ENCODE measurements at regions of chr15 and their contacts with region 1.

Region 1: GRCh38 chr15:54540721-54541120 is 562.5 kb downstream of the UNC13C start:
- DNase-seq: no peak
- ATAC-seq: no peak
- H3K4me3 ChIP-seq: no peak overlapping the region
- H3K27ac ChIP-seq: no peak overlapping the region
- H3K4me1 ChIP-seq: no peaks in the 10 kb centered on the region
- H3K27me3 ChIP-seq: no peaks in the 10 kb centered on the region
- CTCF ChIP-seq: no peak
- EP300 ChIP-seq: no peak
- POLR2A ChIP-seq: no peak
- RAD21 ChIP-seq: no peak

Region 2: GRCh38 chr15:54559405-54560069 is 18.8 kb after region 1 on chr15:
- CTCF ChIA-PET with region 1: no interaction called
- POLR2A ChIA-PET with region 1: no interaction called
- in situ Hi-C with region 1: no loop called
- intact Hi-C with region 1: no loop called
- DNase-seq: no peak
- ATAC-seq: no peak
- H3K4me3 ChIP-seq: no peak overlapping the region
- H3K27ac ChIP-seq: no peak overlapping the region
- H3K4me1 ChIP-seq: no peaks in the 10 kb centered on the region
- H3K27me3 ChIP-seq: no peaks in the 10 kb centered on the region
- CTCF ChIP-seq: no peak
- EP300 ChIP-seq: no peak
- POLR2A ChIP-seq: no peak
- RAD21 ChIP-seq: no peak

Region 3: DNA sequence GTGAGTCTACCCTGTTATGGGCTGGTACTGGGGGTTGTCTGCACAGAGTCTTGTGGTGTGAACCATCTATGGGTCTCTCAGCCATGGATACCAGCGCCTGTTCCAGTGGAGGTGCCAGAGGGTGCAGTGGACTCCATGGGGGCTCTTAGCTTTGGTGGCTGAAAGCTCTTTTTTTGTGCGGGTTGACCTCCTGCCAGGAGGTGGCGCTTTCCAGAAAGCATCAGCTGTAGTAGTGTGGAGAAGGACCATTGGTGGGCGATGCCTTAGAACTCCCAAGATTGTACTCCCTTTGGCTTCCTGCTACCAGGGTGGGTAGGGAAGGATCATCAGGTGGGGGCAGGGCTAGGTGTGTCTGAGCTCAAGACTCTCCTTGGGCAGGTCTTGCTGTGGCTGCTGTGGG is 53.4 kb after region 1 on chr15:
- CTCF ChIA-PET with region 1: no interaction called
- POLR2A ChIA-PET with region 1: no interaction called
- in situ Hi-C with region 1: no loop called
- intact Hi-C with region 1: loop called (anchors 10 kb)
- DNase-seq: no peak
- ATAC-seq: no peak
- H3K4me3 ChIP-seq: no peak overlapping the region
- H3K27ac ChIP-seq: no peak overlapping the region
- H3K4me1 ChIP-seq: no peaks in the 10 kb centered on the region
- H3K27me3 ChIP-seq: no peaks in the 10 kb centered on the region
- CTCF ChIP-seq: no peak
- EP300 ChIP-seq: no peak
- POLR2A ChIP-seq: no peak
- RAD21 ChIP-seq: no peak